Activated naive CD4-positive, alpha-beta T cell treated with anti-CD3 and anti-CD28 coated beads for 36 hours (primary cell): ENCODE measurements at regions of chr10 and their contacts with region 1.

Region 1: GRCh38 chr10:104268716-104269645 is at the start of gene GSTO2:
- DNase-seq: peak; percentile 99
- H3K4me3 Mint-ChIP-seq: peak within 1 kb of the TSS; percentile 84
- H3K27ac Mint-ChIP-seq: peak within 1 kb of the TSS; percentile 99
- H3K4me1 Mint-ChIP-seq: peaks cover 40% of the 10 kb centered on the region
- H3K27me3 Mint-ChIP-seq: no peaks in the 10 kb centered on the region
- total RNA-seq, gene GSTO2: 3.0 to 3.6 TPM

Region 2: DNA sequence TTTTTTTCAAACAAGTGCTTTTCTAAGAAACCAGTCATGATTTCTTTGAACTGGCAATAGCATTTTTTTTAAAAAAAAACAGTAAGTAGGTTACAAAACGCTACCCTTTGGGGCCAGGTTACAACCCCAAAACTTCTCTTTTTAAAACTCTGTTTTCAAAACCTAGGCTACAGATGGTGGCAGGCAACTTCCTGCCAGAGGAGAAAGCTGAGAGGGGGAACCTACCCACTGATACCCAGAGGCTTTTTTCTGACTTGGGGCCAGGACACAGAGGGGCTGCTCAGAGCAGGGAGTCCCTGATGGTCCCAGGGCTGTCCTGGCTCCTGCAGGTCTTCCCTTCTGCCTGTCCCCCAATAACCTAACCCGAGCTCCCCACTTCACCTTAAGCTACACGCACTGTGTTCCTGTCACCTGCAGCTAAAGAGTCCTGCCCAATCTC is 357.9 kb before region 1 on chr10:
- CTCF ChIA-PET with region 1: no interaction called
- intact Hi-C with region 1: loop called (anchors 2 kb)
- DNase-seq: peak; percentile 57
- H3K4me3 Mint-ChIP-seq: peak overlapping the region; percentile 60
- H3K27ac Mint-ChIP-seq: peak overlapping the region; percentile 94
- H3K4me1 Mint-ChIP-seq: peaks cover 72% of the 10 kb centered on the region
- H3K27me3 Mint-ChIP-seq: no peaks in the 10 kb centered on the region

Region 3: GRCh38 chr10:103966671-103967447 is 302.1 kb before region 1 on chr10 and contains the start of gene SLK:
- CTCF ChIA-PET with region 1: no interaction called
- intact Hi-C with region 1: loop called (anchors 1 kb)
- DNase-seq: peak; percentile 76
- H3K4me3 Mint-ChIP-seq: peak within 1 kb of the TSS; percentile 99
- H3K27ac Mint-ChIP-seq: peak within 1 kb of the TSS; percentile 92
- H3K4me1 Mint-ChIP-seq: peaks cover 26% of the 10 kb centered on the region
- H3K27me3 Mint-ChIP-seq: no peaks in the 10 kb centered on the region
- total RNA-seq, gene SLK: 16.0 to 16.1 TPM

Region 4: GRCh38 chr10:104231784-104232612 is 37.0 kb before region 1 on chr10 and contains the start of gene CFAP43:
- CTCF ChIA-PET with region 1: interaction called, 12 read pairs
- intact Hi-C with region 1: loop called (anchors 1 kb)
- DNase-seq: peak; percentile 99
- H3K4me3 Mint-ChIP-seq: peak within 1 kb of the TSS; percentile 87
- H3K27ac Mint-ChIP-seq: peak within 1 kb of the TSS; percentile 50
- H3K4me1 Mint-ChIP-seq: peaks cover 6% of the 10 kb centered on the region
- H3K27me3 Mint-ChIP-seq: peaks cover 8% of the 10 kb centered on the region
- total RNA-seq, gene CFAP43: not detected

Region 5: DNA sequence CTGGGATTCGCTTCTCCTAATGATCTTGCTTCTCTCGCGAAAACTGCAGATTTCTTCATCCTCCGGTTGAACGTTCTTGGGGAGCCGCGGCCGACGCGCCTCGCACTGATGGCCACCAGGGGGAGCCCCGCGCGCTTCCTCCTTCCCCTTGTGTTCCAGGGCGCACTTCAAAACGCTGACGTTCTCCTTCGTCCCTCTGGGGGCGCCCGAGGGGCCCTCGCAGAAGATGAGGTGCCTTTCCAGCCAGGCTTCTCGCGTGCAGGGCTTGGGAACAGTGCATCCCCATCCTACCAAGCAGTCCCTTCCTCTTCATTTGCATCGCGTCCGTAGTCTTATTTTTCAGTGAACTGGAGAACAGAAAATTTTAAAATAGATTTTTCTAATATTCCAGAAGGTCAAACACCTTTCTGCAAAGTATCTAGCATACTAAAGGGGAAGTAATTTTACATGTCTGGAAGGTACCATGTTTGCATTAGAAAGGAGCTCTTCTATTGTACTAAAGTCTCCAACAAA is 22.5 kb after region 1 on chr10:
- CTCF ChIA-PET with region 1: interaction called, 195 read pairs
- intact Hi-C with region 1: loop called (anchors 1 kb)
- DNase-seq: peak; percentile 93
- H3K4me3 Mint-ChIP-seq: peak overlapping the region; percentile 10
- H3K27ac Mint-ChIP-seq: no peak overlapping the region
- H3K4me1 Mint-ChIP-seq: peaks cover 19% of the 10 kb centered on the region
- H3K27me3 Mint-ChIP-seq: peaks cover 3% of the 10 kb centered on the region

Region 6: GRCh38 chr10:104308439-104308903 is 39.5 kb after region 1 on chr10:
- CTCF ChIA-PET with region 1: interaction called, 30 read pairs
- intact Hi-C with region 1: loop called (anchors 1 kb)
- DNase-seq: peak; percentile 58
- H3K4me3 Mint-ChIP-seq: peak overlapping the region; percentile 17
- H3K27ac Mint-ChIP-seq: peak overlapping the region; percentile 89
- H3K4me1 Mint-ChIP-seq: peaks cover 60% of the 10 kb centered on the region
- H3K27me3 Mint-ChIP-seq: peaks cover 3% of the 10 kb centered on the region

Region 7: GRCh38 chr10:104337974-104338735 is 69.2 kb after region 1 on chr10 and contains the start of gene ITPRIP:
- CTCF ChIA-PET with region 1: interaction called, 6 read pairs
- intact Hi-C with region 1: loop called (anchors 1 kb)
- DNase-seq: peak; percentile 78
- H3K4me3 Mint-ChIP-seq: peak within 1 kb of the TSS; percentile 84
- H3K27ac Mint-ChIP-seq: peak within 1 kb of the TSS; percentile 98
- H3K4me1 Mint-ChIP-seq: peaks cover 46% of the 10 kb centered on the region
- H3K27me3 Mint-ChIP-seq: no peaks in the 10 kb centered on the region
- total RNA-seq, gene ITPRIP: 24.5 to 25.3 TPM

Region 8: GRCh38 chr10:104694074-104694473 is 425.1 kb after region 1 on chr10:
- CTCF ChIA-PET with region 1: no interaction called
- intact Hi-C with region 1: no loop called
- DNase-seq: no peak
- H3K4me3 Mint-ChIP-seq: no peak overlapping the region
- H3K27ac Mint-ChIP-seq: no peak overlapping the region
- H3K4me1 Mint-ChIP-seq: no peaks in the 10 kb centered on the region
- H3K27me3 Mint-ChIP-seq: peaks cover 15% of the 10 kb centered on the region